ENCODE measurements at regions of chr4 and their contacts with region 1.

Region 1: DNA sequence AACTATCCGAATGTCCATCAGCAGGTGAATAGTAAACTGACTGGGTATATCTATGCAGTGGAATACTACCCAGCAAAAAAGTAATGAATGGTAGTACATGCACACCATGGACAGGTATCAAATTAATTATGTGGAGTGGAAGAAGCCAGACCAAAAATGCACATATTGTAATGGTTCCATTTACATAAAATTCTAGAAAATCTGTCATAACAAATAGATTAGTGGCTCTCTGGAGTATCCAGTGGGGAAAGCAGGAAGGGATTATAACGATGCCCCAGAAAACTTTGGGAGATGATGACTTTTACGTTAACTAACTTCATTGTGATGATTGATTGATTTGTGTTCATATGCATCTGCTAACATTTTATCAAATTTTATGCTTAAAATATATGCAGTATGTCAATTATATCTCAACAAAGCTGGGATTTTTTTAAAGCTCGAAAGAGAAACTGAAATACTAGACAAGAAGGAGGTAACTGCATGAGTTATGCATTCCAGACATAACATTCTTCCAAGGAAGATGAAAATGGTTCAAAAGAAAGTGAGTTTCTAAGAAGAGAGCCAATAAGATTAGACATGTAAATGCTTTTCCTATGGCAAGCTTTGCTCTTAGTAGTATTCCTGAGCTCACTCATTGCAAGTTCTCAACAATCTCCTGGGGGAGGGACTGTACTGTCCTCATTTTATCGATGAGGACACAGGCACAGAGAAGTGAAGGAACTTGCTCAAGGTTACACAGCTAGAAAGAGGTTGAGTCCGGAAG is 58.6 kb upstream of the MSX1 start:
- DNase-seq: no peak
- H3K4me3 ChIP-seq: no peak overlapping the region
- H3K27ac ChIP-seq: no peak overlapping the region
- H3K4me1 ChIP-seq: no peaks in the 10 kb centered on the region
- H3K27me3 ChIP-seq: no peaks in the 10 kb centered on the region
- CTCF ChIP-seq: no peak

Region 2: DNA sequence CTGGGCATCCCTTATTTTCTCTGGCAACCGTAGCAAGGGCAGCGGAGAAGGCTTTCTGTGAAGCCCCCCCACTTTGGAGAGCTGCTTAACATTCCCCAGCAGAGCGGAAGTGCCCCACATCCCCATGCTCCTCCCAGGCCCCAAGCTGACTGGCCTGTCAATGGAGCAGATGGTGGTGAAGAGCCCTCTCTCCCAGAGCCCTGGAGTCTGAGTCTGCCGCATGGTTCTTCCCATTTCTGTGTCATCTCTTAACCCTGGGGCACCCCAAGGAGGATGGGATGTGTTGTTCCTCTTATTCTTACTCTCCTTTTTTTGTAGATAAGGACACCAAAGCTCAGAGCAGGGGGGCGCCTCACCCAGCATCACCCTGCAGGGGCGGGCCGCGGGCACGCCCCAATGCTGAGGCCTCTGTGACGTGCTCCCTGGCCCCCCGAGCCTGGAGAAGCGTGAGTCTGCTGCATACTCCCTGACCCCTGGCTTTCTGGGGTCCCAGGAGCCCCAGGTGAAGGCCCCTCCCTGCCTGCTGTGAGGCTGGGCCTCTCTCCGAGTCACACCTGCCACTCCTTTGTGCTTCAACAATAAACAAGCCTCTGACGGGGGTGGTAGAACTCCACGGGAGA is 998.8 kb before region 1 on chr4:
- CTCF ChIA-PET with region 1: no interaction called
- dilution Hi-C with region 1: no loop called
- in situ Hi-C with region 1: no loop called
- intact Hi-C with region 1: no loop called
- DNase-seq: no peak
- H3K4me3 ChIP-seq: no peak overlapping the region
- H3K27ac ChIP-seq: no peak overlapping the region
- H3K4me1 ChIP-seq: no peaks in the 10 kb centered on the region
- H3K27me3 ChIP-seq: no peaks in the 10 kb centered on the region
- CTCF ChIP-seq: no peak

Region 3: DNA sequence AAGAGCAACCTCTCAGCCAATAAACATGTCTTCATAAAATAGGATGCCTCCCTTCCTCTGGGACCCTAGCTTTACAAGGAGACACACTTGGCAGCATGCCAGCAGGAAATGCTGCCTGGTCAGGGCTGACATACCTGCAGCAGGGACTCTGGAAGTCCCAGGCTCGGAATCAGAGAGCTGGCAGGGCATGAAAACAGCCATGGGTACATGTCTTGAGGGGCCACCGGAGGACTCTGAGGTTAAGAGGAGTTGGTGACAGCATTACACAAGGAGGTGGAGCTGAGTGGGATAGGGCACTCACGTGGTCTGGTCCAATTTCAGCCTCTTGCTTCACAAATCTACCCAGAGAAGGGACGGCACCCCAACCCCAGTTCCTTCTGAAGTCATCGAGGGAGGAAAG is 74.3 kb after region 1 on chr4:
- CTCF ChIA-PET with region 1: no interaction called
- dilution Hi-C with region 1: loop called (anchors 5 kb)
- in situ Hi-C with region 1: no loop called
- intact Hi-C with region 1: no loop called
- DNase-seq: no peak
- H3K4me3 ChIP-seq: no peak overlapping the region
- H3K27ac ChIP-seq: no peak overlapping the region
- H3K4me1 ChIP-seq: no peaks in the 10 kb centered on the region
- H3K27me3 ChIP-seq: peaks cover 30% of the 10 kb centered on the region
- CTCF ChIP-seq: no peak

Measured in mammary epithelial cell (primary cell).